ENCODE measurements at regions of chr21 and their contacts with region 1.

Region 1: GRCh38 chr21:36260030-36260787 is 59.8 kb upstream of the MORC3 start:
- DNase-seq: peak; percentile 66

Region 2: GRCh38 chr21:35974818-35975217 is 285.4 kb before region 1 on chr21:
- in situ Hi-C with region 1: no loop called
- DNase-seq: no peak

Region 3: GRCh38 chr21:36369064-36369685 is 109.0 kb after region 1 on chr21:
- in situ Hi-C with region 1: loop called (anchors 10 kb)
- DNase-seq: no peak